OCI-LY7 (cell line): ENCODE measurements at regions of chr7 and their contacts with region 1.

Region 1: GRCh38 chr7:23964726-23965125 is 254.7 kb downstream of the STK31 start:
- DNase-seq: no peak
- H3K4me3 ChIP-seq: no peak overlapping the region
- H3K27ac ChIP-seq: no peak overlapping the region
- H3K4me1 ChIP-seq: no peaks in the 10 kb centered on the region
- CTCF ChIP-seq: no peak

Region 2: DNA sequence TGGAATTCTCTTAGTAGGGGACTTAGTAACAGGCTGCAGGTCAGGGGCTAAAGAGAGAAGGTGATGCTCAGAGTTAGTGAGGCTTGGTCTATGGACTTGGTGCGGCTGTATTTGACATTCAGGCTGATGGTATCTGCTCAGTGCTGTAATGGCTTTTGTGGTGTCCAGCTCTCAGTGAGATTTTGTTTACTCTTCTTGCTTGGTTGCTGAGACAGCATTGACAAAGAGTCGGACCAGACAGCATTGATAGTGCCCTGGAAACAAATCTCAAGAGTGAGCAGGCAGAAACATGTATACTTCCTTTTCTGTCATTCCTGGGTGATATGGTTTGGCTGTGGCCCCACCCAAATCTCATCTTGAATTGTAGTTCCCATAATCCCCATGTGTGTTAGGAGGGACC is 52.7 kb before region 1 on chr7:
- CTCF ChIA-PET with region 1: no interaction called
- POLR2A ChIA-PET with region 1: no interaction called
- intact Hi-C with region 1: loop called (anchors 5 kb)
- DNase-seq: no peak
- H3K4me3 ChIP-seq: no peak overlapping the region
- H3K27ac ChIP-seq: no peak overlapping the region
- H3K4me1 ChIP-seq: no peaks in the 10 kb centered on the region
- CTCF ChIP-seq: no peak